Motor neuron (in vitro differentiated cells): ENCODE measurements at regions of chr3 and their contacts with region 1.

Region 1: GRCh38 chr3:159804726-159805410 is 183.8 kb upstream of the IL12A start:
- ATAC-seq: peak; percentile 93 to 99 (median 98)
- H3K4me3 ChIP-seq: no peak overlapping the region
- H3K27ac ChIP-seq: no peak overlapping the region
- H3K4me1 ChIP-seq: peaks cover 0 to 3% of the 10 kb centered on the region in 2 donors

Region 2: DNA sequence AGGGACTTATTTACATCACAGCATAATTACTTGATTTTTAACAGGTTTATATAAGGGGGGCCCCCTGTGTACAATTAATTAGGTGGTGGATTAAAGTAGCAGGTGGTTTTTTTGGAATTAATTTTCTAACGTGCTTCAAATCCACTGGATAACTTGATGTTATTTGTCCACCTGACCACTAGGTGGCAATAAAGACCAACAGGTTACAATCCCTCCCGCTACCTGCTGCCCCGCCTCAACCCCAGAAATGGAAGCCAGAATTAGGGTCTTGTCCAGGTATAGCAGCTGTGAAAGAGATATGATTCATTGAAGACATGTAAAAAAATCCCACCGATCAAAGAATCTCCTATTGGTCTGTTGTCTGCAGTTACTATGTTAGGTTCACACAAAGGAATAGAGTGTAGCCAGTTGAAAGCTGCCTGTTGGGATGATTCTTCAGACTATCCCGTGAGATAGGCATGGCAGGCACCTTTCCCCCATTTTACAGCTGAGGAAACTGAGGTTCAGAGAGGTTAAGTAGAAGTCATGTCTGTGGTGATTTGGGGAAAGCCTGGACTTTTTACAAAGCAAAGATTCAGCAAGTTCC is 959.0 kb before region 1 on chr3:
- in situ Hi-C with region 1: loop called in 2 of 9 experiments (anchors 25 kb)
- ATAC-seq: peak in 6 of 8 experiments; percentile 27 to 61 (median 45)
- H3K4me3 ChIP-seq: no peak overlapping the region
- H3K27ac ChIP-seq: no peak overlapping the region
- H3K4me1 ChIP-seq: peaks cover 29 to 44% of the 10 kb centered on the region in 2 donors

Region 3: DNA sequence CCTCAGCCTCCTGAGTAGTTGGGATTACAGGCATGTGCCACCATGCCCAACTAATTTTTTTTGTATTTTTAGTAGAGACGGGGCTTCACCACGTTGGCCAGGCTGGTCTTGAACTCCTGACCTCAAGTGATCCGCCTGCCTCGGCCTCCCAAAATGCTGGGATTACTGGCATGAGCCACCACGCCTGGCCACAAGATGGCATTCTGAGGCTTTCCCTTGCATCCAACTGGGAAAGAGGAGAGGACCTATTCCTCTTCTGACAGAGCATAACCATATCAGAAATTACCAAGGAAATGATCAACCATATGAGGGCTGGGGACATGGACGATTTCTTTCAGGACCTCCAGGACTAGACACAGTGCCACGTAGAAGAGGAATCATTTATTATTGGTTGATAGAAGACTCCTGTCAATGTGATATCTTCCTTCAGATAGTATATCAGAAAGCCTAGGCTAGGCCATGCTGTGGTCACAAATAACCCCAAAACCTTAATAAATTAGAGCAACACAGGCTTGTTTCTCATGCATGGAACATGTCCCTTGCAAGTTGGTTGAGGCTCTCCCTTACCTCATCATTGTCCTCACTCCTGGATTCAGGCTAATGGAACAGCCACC is 188.5 kb before region 1 on chr3:
- in situ Hi-C with region 1: loop called in 3 of 9 experiments (anchors 10 to 25 kb)
- ATAC-seq: peak in 4 of 8 experiments; percentile 50 to 95 (median 84)
- H3K4me3 ChIP-seq: no peak overlapping the region
- H3K27ac ChIP-seq: no peak overlapping the region
- H3K4me1 ChIP-seq: peaks cover 0 to 14% of the 10 kb centered on the region in 2 donors